GM12878 (cell line): ENCODE measurements at regions of chr15 and their contacts with region 1.

Region 1: GRCh38 chr15:60520825-60521368 is 42.0 kb upstream of the ICE2 start:
- DNase-seq: no peak
- ATAC-seq: peak; percentile 92
- H3K4me3 ChIP-seq: no peak overlapping the region
- H3K27ac ChIP-seq: peak overlapping the region; percentile 67
- H3K4me1 ChIP-seq: peaks cover 16% of the 10 kb centered on the region
- H3K27me3 ChIP-seq: no peaks in the 10 kb centered on the region
- CTCF ChIP-seq: peak; percentile 74 to 86 (median 86)
- EP300 ChIP-seq: no peak
- POLR2A ChIP-seq: no peak
- RAD21 ChIP-seq: peak; percentile 83

Region 2: GRCh38 chr15:60326824-60327654 is 193.9 kb before region 1 on chr15:
- CTCF ChIA-PET with region 1: interaction called, 11 read pairs
- POLR2A ChIA-PET with region 1: no interaction called
- RAD21 ChIA-PET with region 1: interaction called, 4 read pairs
- SMC1A ChIA-PET with region 1: interaction called, 12 read pairs
- in situ Hi-C with region 1: no loop called
- intact Hi-C with region 1: no loop called
- DNase-seq: no peak
- ATAC-seq: peak; percentile 46; the same call in 2 of the 3 replicates
- H3K4me3 ChIP-seq: no peak overlapping the region
- H3K27ac ChIP-seq: no peak overlapping the region
- H3K4me1 ChIP-seq: no peaks in the 10 kb centered on the region
- H3K27me3 ChIP-seq: peaks cover 0 to 3% of the 10 kb centered on the region in 2 experiments; a peak in 2 of 4 replicates
- CTCF ChIP-seq: peak; percentile 69 to 79 (median 78)
- EP300 ChIP-seq: no peak
- POLR2A ChIP-seq: no peak
- RAD21 ChIP-seq: peak; percentile 90

Region 3: GRCh38 chr15:60507596-60508424 is 13.1 kb before region 1 on chr15:
- CTCF ChIA-PET with region 1: interaction called, 222 read pairs
- POLR2A ChIA-PET with region 1: no interaction called
- RAD21 ChIA-PET with region 1: interaction called, 43 read pairs
- SMC1A ChIA-PET with region 1: interaction called, 71 read pairs
- in situ Hi-C with region 1: no loop called
- intact Hi-C with region 1: no loop called
- DNase-seq: peak; percentile 83
- ATAC-seq: peak; percentile 92
- H3K4me3 ChIP-seq: no peak overlapping the region
- H3K27ac ChIP-seq: peak overlapping the region; percentile 46; the same call in 1 of the 2 replicates
- H3K4me1 ChIP-seq: peaks cover 18% of the 10 kb centered on the region
- H3K27me3 ChIP-seq: no peaks in the 10 kb centered on the region
- CTCF ChIP-seq: peak; percentile 88 to 97 (median 95)
- EP300 ChIP-seq: no peak
- POLR2A ChIP-seq: no peak
- RAD21 ChIP-seq: peak; percentile 92

Region 4: GRCh38 chr15:60541481-60542299 is 20.8 kb after region 1 on chr15:
- CTCF ChIA-PET with region 1: interaction called, 52 read pairs
- POLR2A ChIA-PET with region 1: interaction called, 4 read pairs
- RAD21 ChIA-PET with region 1: interaction called, 5 read pairs
- SMC1A ChIA-PET with region 1: interaction called, 33 read pairs
- in situ Hi-C with region 1: no loop called
- intact Hi-C with region 1: no loop called
- DNase-seq: no peak
- ATAC-seq: peak; percentile 18; the same call in 2 of the 3 replicates
- H3K4me3 ChIP-seq: no peak overlapping the region
- H3K27ac ChIP-seq: no peak overlapping the region
- H3K4me1 ChIP-seq: peaks cover 16% of the 10 kb centered on the region
- H3K27me3 ChIP-seq: no peaks in the 10 kb centered on the region
- CTCF ChIP-seq: no peak
- EP300 ChIP-seq: no peak
- POLR2A ChIP-seq: no peak
- RAD21 ChIP-seq: no peak

Region 5: GRCh38 chr15:60568301-60568742 is 47.4 kb after region 1 on chr15:
- CTCF ChIA-PET with region 1: interaction called, 27 read pairs
- POLR2A ChIA-PET with region 1: no interaction called
- RAD21 ChIA-PET with region 1: interaction called, 11 read pairs
- SMC1A ChIA-PET with region 1: interaction called, 41 read pairs
- in situ Hi-C with region 1: no loop called
- intact Hi-C with region 1: no loop called
- DNase-seq: peak; percentile 87
- ATAC-seq: peak; percentile 79
- H3K4me3 ChIP-seq: peak overlapping the region; percentile 26
- H3K27ac ChIP-seq: peak overlapping the region; percentile 93
- H3K4me1 ChIP-seq: peaks cover 75% of the 10 kb centered on the region
- H3K27me3 ChIP-seq: no peaks in the 10 kb centered on the region
- CTCF ChIP-seq: no peak
- EP300 ChIP-seq: peak in 1 of 2 experiments; percentile 61; a peak in 2 of 4 replicates
- POLR2A ChIP-seq: peak; percentile 79
- RAD21 ChIP-seq: no peak

Region 6: GRCh38 chr15:60592371-60593169 is 71.7 kb after region 1 on chr15:
- CTCF ChIA-PET with region 1: interaction called, 65 read pairs
- POLR2A ChIA-PET with region 1: interaction called, 3 read pairs
- RAD21 ChIA-PET with region 1: interaction called, 9 read pairs
- SMC1A ChIA-PET with region 1: interaction called, 11 read pairs
- in situ Hi-C with region 1: no loop called
- intact Hi-C with region 1: no loop called
- DNase-seq: no peak
- ATAC-seq: peak; percentile 74
- H3K4me3 ChIP-seq: peak overlapping the region; percentile 83
- H3K27ac ChIP-seq: no peak overlapping the region
- H3K4me1 ChIP-seq: no peaks in the 10 kb centered on the region
- H3K27me3 ChIP-seq: no peaks in the 10 kb centered on the region; a peak in 1 of 4 replicates
- CTCF ChIP-seq: peak; percentile 20 to 40 (median 35); a peak in 4 of 6 replicates
- EP300 ChIP-seq: no peak
- POLR2A ChIP-seq: peak; percentile 82
- RAD21 ChIP-seq: peak; percentile 19; the same call in 1 of the 2 replicates

Region 7: GRCh38 chr15:60973637-60974415 is 452.9 kb after region 1 on chr15:
- CTCF ChIA-PET with region 1: no interaction called
- POLR2A ChIA-PET with region 1: no interaction called
- RAD21 ChIA-PET with region 1: no interaction called
- SMC1A ChIA-PET with region 1: no interaction called
- in situ Hi-C with region 1: no loop called
- intact Hi-C with region 1: no loop called
- DNase-seq: no peak
- ATAC-seq: no peak
- H3K4me3 ChIP-seq: no peak overlapping the region
- H3K27ac ChIP-seq: no peak overlapping the region
- H3K4me1 ChIP-seq: no peaks in the 10 kb centered on the region
- H3K27me3 ChIP-seq: no peaks in the 10 kb centered on the region; a peak in 2 of 4 replicates
- CTCF ChIP-seq: no peak
- EP300 ChIP-seq: no peak
- POLR2A ChIP-seq: no peak
- RAD21 ChIP-seq: no peak